Activated CD8-positive, alpha-beta T cell treated with anti-CD3 and anti-CD28 coated beads for 36 hours (primary cell): ENCODE measurements at regions of chr12 and their contacts with region 1.

Region 1: GRCh38 chr12:106223485-106224354 is 24.1 kb downstream of the CKAP4 start:
- DNase-seq: peak; percentile 75
- ATAC-seq: peak; percentile 81
- H3K4me3 Mint-ChIP-seq: no peak overlapping the region
- H3K27ac Mint-ChIP-seq: no peak overlapping the region
- H3K4me1 Mint-ChIP-seq: peaks cover 17% of the 10 kb centered on the region
- H3K27me3 Mint-ChIP-seq: peaks cover 11% of the 10 kb centered on the region
- CTCF ChIP-seq: peak; percentile 83

Region 2: GRCh38 chr12:105420659-105421240 is 803.0 kb before region 1 on chr12:
- CTCF ChIA-PET with region 1: interaction called, 5 read pairs
- POLR2A ChIA-PET with region 1: no interaction called
- intact Hi-C with region 1: loop called (anchors 5 kb)
- DNase-seq: peak; percentile 77
- ATAC-seq: peak; percentile 76
- H3K4me3 Mint-ChIP-seq: no peak overlapping the region
- H3K27ac Mint-ChIP-seq: no peak overlapping the region
- H3K4me1 Mint-ChIP-seq: peaks cover 11% of the 10 kb centered on the region
- H3K27me3 Mint-ChIP-seq: no peaks in the 10 kb centered on the region
- CTCF ChIP-seq: peak; percentile 89

Region 3: DNA sequence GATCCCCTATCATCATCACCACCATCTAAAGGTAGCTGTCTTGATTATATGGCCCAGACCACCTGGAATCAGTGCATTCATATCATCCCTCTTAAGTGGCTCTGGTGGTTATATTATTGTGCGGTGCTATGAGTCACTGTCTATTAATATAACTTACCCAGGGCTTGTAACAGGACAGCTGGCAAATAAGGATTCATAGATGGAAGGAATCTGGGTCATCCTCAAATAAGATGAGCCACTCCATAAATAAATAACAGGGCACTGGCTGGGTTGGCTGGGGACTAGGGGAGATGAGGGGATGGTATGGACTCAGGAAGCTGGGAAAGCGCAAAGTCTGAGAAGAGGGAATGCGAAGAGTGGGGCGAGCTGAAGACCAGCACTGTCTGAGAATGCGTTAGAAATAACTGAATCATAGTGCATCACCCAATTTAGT is 301.0 kb before region 1 on chr12:
- CTCF ChIA-PET with region 1: no interaction called
- POLR2A ChIA-PET with region 1: no interaction called
- intact Hi-C with region 1: no loop called
- DNase-seq: no peak
- ATAC-seq: no peak
- H3K4me3 Mint-ChIP-seq: no peak overlapping the region
- H3K27ac Mint-ChIP-seq: no peak overlapping the region
- H3K4me1 Mint-ChIP-seq: no peaks in the 10 kb centered on the region
- H3K27me3 Mint-ChIP-seq: peaks cover under 1% of the 10 kb centered on the region
- CTCF ChIP-seq: no peak

Region 4: GRCh38 chr12:106179086-106179485 is 44.6 kb before region 1 on chr12:
- CTCF ChIA-PET with region 1: no interaction called
- POLR2A ChIA-PET with region 1: no interaction called
- intact Hi-C with region 1: no loop called
- DNase-seq: no peak
- ATAC-seq: no peak
- H3K4me3 Mint-ChIP-seq: no peak overlapping the region
- H3K27ac Mint-ChIP-seq: no peak overlapping the region
- H3K4me1 Mint-ChIP-seq: no peaks in the 10 kb centered on the region
- H3K27me3 Mint-ChIP-seq: peaks cover 4% of the 10 kb centered on the region
- CTCF ChIP-seq: no peak

Region 5: DNA sequence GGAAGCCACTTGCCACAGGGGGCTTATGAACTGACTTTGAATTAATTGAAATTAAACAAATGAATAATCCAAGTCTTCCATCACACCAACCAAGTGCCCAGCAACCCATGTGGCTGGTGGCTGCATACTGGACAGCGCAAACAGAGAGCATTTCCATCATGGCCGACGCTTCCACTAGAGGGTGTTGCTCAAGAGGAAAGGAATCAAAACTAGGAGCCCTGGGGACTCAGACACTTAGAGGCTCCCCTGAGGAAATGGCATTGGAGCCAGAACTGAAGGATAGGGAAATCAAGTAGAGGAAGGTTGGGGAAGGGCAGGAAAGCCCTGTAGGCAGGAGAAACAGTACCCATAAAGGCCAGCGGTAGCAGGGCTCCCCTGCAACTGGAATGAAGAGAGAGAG is 34.4 kb before region 1 on chr12:
- CTCF ChIA-PET with region 1: interaction called, 15 read pairs
- POLR2A ChIA-PET with region 1: no interaction called
- intact Hi-C with region 1: no loop called
- DNase-seq: no peak
- ATAC-seq: no peak
- H3K4me3 Mint-ChIP-seq: no peak overlapping the region
- H3K27ac Mint-ChIP-seq: no peak overlapping the region
- H3K4me1 Mint-ChIP-seq: no peaks in the 10 kb centered on the region
- H3K27me3 Mint-ChIP-seq: peaks cover 9% of the 10 kb centered on the region
- CTCF ChIP-seq: no peak

Region 6: DNA sequence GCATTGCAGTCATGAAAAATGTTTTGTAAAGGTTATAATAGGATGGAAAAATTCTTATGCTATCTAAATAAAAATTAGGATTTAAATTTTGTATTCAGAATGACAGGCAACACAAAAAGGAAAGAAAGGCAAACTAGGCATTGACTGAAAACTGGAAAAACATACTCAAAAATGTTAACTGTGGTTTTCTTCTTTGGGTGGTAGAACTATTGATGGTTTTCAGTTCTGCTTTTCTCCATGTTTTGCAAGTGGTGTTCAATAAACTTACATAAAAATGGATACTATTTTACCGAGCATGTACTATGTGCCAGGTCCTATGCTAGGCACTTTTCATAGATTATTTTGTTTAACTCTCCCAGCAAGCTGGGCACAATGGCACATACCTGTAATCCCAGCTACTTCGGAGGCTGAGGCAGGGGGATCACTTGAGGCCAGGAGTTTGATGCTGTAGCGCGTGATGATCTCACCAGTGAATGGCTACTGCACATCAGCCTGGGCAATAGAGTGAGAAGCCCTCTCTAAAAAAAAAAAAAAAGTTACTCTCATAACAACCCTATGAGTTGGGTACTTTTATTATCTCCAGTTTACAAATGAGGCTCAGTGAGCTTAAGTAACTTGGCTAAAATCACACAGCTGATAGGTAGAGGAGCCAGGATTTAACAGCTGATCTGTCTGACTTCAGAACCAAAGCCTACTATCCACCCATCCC is 52.5 kb after region 1 on chr12:
- CTCF ChIA-PET with region 1: interaction called, 45 read pairs
- POLR2A ChIA-PET with region 1: no interaction called
- intact Hi-C with region 1: no loop called
- DNase-seq: no peak
- ATAC-seq: no peak
- H3K4me3 Mint-ChIP-seq: no peak overlapping the region
- H3K27ac Mint-ChIP-seq: no peak overlapping the region
- H3K4me1 Mint-ChIP-seq: no peaks in the 10 kb centered on the region
- H3K27me3 Mint-ChIP-seq: no peaks in the 10 kb centered on the region
- CTCF ChIP-seq: no peak

Region 7: DNA sequence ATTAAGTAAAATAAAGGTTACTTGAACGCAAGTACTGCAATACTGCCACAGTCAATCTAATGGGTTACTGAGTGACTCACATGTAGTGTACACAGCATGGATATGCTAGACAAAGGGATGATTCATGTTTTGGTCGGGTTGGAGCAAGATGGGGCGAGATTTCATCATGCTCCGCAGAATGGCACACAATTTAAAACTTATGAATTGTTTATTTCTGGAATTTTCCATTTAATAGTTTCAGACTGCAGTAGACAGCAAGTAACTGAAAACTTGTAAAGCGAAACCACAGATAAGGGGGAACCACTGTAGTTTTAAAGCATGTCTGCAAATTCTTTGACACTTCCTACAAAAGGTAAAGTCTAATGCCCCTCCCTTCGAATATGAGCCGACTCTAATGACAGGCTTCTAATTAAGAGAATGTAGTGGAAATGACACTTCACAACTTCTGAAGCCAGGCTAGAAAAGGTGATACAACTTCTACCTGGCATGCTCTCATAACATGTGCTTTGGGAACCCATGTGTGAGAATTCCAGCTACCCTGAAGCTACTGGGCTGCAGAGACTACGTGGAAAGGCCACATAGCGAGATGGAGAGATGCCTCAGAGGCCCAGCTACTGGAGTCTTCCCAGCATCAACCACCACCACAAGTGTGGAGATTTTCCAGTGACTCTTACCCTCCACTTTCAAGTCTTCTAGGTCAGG is 64.9 kb after region 1 on chr12:
- CTCF ChIA-PET with region 1: interaction called, 82 read pairs
- POLR2A ChIA-PET with region 1: no interaction called
- intact Hi-C with region 1: loop called (anchors 2 kb)
- DNase-seq: peak; percentile 69
- ATAC-seq: peak; percentile 88
- H3K4me3 Mint-ChIP-seq: no peak overlapping the region
- H3K27ac Mint-ChIP-seq: peak overlapping the region; percentile 85
- H3K4me1 Mint-ChIP-seq: peaks cover 26% of the 10 kb centered on the region
- H3K27me3 Mint-ChIP-seq: peaks cover 11% of the 10 kb centered on the region
- CTCF ChIP-seq: no peak

Region 8: GRCh38 chr12:106331599-106331998 is 107.9 kb after region 1 on chr12:
- CTCF ChIA-PET with region 1: interaction called, 13 read pairs
- POLR2A ChIA-PET with region 1: no interaction called
- intact Hi-C with region 1: no loop called
- DNase-seq: no peak
- ATAC-seq: no peak
- H3K4me3 Mint-ChIP-seq: no peak overlapping the region
- H3K27ac Mint-ChIP-seq: no peak overlapping the region
- H3K4me1 Mint-ChIP-seq: peaks cover 15% of the 10 kb centered on the region
- H3K27me3 Mint-ChIP-seq: no peaks in the 10 kb centered on the region
- CTCF ChIP-seq: no peak